Naive thymus-derived CD4-positive, alpha-beta T cell (primary cell): ENCODE measurements at regions of chr4 and their contacts with region 1.

Region 1: DNA sequence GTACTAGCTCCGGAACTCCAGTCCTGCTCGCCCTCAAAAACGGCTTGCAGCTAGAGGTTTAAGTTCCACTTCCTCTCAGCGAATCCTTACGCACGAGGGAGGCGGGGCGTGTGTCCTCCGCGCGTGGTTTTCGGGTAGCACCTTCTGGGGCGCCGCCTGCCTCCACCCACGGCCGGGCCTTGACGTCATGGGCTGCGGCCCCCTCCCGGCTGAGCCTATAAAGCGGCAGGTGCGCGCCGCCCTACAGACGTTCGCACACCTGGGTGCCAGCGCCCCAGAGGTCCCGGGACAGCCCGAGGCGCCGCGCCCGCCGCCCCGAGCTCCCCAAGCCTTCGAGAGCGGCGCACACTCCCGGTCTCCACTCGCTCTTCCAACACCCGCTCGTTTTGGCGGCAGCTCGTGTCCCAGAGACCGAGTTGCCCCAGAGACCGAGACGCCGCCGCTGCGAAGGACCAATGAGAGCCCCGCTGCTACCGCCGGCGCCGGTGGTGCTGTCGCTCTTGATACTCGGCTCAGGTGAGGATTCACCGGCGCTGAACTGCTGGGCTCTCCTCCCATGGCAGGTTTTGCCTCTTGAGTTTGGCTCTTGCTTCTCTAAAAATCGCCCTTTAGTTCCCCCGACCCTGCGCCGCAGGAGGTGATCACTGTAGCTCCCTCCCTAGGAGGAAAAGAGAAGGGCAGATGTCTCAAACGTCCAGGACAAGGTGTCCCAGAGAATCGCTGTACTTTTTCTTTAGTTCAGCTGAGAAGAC is at the start of gene AREG:
- DNase-seq: peak; percentile 85 to 96 (median 94)
- ATAC-seq: peak; percentile 97
- H3K4me3 ChIP-seq: peak within 1 kb of the TSS; percentile 63
- H3K4me3 Mint-ChIP-seq: peak within 1 kb of the TSS; percentile 84 to 96 (median 92)
- H3K27ac ChIP-seq: peak within 1 kb of the TSS; percentile 93
- H3K27ac Mint-ChIP-seq: peak within 1 kb of the TSS; percentile 74 to 99 (median 97)
- H3K4me1 ChIP-seq: peaks cover 0 to 6% of the 10 kb centered on the region in 2 donors
- H3K4me1 Mint-ChIP-seq: peaks cover 4 to 15% (median 14%) of the 10 kb centered on the region in 7 donors
- H3K27me3 ChIP-seq: no peaks in the 10 kb centered on the region
- H3K27me3 Mint-ChIP-seq: peaks cover 0 to 13% (median 0%) of the 10 kb centered on the region in 5 donors
- total RNA-seq, gene AREG: 0.36 to 30.5 (median 6.7) TPM in 4 of 5 experiments, not detected in the other

Region 2: GRCh38 chr4:74157561-74158465 is 287.3 kb before region 1 on chr4 and contains the start of gene MTHFD2L:
- CTCF ChIA-PET with region 1: no interaction called
- POLR2A ChIA-PET with region 1: no interaction called
- intact Hi-C with region 1: loop called in 1 of 2 experiments (anchors 1 kb)
- DNase-seq: peak; percentile 68 to 88 (median 75)
- ATAC-seq: peak; percentile 97
- H3K4me3 ChIP-seq: peak within 1 kb of the TSS; percentile 68
- H3K4me3 Mint-ChIP-seq: peak within 1 kb of the TSS; percentile 86 to 95 (median 90)
- H3K27ac ChIP-seq: peak within 1 kb of the TSS; percentile 78
- H3K27ac Mint-ChIP-seq: peak within 1 kb of the TSS; percentile 62 to 96 (median 90)
- H3K4me1 ChIP-seq: peaks cover 6 to 9% of the 10 kb centered on the region in 2 donors
- H3K4me1 Mint-ChIP-seq: peaks cover 10 to 48% (median 26%) of the 10 kb centered on the region in 7 donors
- H3K27me3 ChIP-seq: no peaks in the 10 kb centered on the region
- H3K27me3 Mint-ChIP-seq: peaks cover 0 to 30% (median 0%) of the 10 kb centered on the region in 5 donors
- total RNA-seq, gene MTHFD2L: 7.5 to 13.7 (median 10.4) TPM

Region 3: DNA sequence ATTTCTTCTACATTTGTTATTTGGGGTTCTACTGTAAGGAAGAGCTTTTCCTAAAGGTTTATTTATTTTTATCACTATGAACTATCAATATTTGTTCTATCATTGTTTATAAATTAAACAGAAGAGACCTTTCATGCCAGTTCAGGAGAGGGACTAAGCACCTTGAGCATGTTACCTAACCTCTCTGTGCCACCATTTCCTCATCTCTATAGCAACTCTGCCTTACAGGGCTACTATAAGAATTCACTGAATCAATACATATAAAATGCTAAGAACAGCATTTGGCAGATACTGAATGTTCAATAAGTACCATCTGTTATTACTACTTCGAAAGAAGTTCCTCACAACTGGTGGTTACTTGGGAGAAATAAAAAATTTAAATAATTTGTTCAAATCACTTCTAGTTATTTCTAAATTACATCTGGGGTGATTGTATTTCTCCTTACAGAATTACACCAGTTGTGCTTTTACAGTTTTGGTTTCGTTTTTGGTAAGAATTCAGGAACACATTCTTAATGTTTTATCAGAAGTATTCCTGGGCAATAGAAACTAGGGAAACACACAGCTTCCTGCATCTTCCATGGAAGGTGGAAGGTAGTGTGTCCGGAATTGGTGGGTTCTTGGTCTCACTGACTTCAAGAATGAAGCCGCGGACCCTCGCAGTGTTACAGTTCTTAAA is 47.2 kb before region 1 on chr4:
- CTCF ChIA-PET with region 1: interaction called, 3 read pairs
- POLR2A ChIA-PET with region 1: interaction called, 14 read pairs
- intact Hi-C with region 1: loop called (anchors 1 kb)
- DNase-seq: peak in 4 of 9 donors; percentile 10 to 58 (median 38)
- ATAC-seq: peak; percentile 78
- H3K4me3 ChIP-seq: peak overlapping the region; percentile 76
- H3K4me3 Mint-ChIP-seq: peak overlapping the region; percentile 89 to 99 (median 96)
- H3K27ac ChIP-seq: peak overlapping the region; percentile 83
- H3K27ac Mint-ChIP-seq: peak overlapping the region; percentile 92 to 99 (median 97)
- H3K4me1 ChIP-seq: no peaks in the 10 kb centered on the region
- H3K4me1 Mint-ChIP-seq: peaks cover 0 to 19% (median 11%) of the 10 kb centered on the region in 7 donors
- H3K27me3 ChIP-seq: no peaks in the 10 kb centered on the region
- H3K27me3 Mint-ChIP-seq: peaks cover 0 to 5% (median 0%) of the 10 kb centered on the region in 5 donors

Region 4: GRCh38 chr4:74466242-74466641 is 21.2 kb after region 1 on chr4:
- CTCF ChIA-PET with region 1: no interaction called
- POLR2A ChIA-PET with region 1: no interaction called
- intact Hi-C with region 1: no loop called
- DNase-seq: no peak
- ATAC-seq: no peak
- H3K4me3 ChIP-seq: no peak overlapping the region
- H3K4me3 Mint-ChIP-seq: no peak overlapping the region
- H3K27ac ChIP-seq: no peak overlapping the region
- H3K27ac Mint-ChIP-seq: no peak overlapping the region
- H3K4me1 ChIP-seq: no peaks in the 10 kb centered on the region
- H3K4me1 Mint-ChIP-seq: no peaks in the 10 kb centered on the region
- H3K27me3 ChIP-seq: no peaks in the 10 kb centered on the region
- H3K27me3 Mint-ChIP-seq: peaks cover 0 to 11% (median 1%) of the 10 kb centered on the region in 5 donors

Region 5: GRCh38 chr4:74623041-74623440 is 178.0 kb after region 1 on chr4:
- CTCF ChIA-PET with region 1: no interaction called
- POLR2A ChIA-PET with region 1: no interaction called
- intact Hi-C with region 1: loop called in 1 of 2 experiments (anchors 1 kb)
- DNase-seq: peak in 6 of 9 donors; percentile 4 to 47 (median 34)
- ATAC-seq: peak; percentile 70
- H3K4me3 ChIP-seq: no peak overlapping the region
- H3K4me3 Mint-ChIP-seq: peak overlapping the region in 2 of 10 donors; percentile 0 to 29
- H3K27ac ChIP-seq: no peak overlapping the region
- H3K27ac Mint-ChIP-seq: peak overlapping the region in 2 of 9 donors; percentile 4 to 8
- H3K4me1 ChIP-seq: peaks cover 0 to 20% of the 10 kb centered on the region in 2 donors
- H3K4me1 Mint-ChIP-seq: peaks cover 7 to 48% (median 37%) of the 10 kb centered on the region in 7 donors
- H3K27me3 ChIP-seq: no peaks in the 10 kb centered on the region
- H3K27me3 Mint-ChIP-seq: peaks cover 0 to 5% (median 0%) of the 10 kb centered on the region in 5 donors

Region 6: DNA sequence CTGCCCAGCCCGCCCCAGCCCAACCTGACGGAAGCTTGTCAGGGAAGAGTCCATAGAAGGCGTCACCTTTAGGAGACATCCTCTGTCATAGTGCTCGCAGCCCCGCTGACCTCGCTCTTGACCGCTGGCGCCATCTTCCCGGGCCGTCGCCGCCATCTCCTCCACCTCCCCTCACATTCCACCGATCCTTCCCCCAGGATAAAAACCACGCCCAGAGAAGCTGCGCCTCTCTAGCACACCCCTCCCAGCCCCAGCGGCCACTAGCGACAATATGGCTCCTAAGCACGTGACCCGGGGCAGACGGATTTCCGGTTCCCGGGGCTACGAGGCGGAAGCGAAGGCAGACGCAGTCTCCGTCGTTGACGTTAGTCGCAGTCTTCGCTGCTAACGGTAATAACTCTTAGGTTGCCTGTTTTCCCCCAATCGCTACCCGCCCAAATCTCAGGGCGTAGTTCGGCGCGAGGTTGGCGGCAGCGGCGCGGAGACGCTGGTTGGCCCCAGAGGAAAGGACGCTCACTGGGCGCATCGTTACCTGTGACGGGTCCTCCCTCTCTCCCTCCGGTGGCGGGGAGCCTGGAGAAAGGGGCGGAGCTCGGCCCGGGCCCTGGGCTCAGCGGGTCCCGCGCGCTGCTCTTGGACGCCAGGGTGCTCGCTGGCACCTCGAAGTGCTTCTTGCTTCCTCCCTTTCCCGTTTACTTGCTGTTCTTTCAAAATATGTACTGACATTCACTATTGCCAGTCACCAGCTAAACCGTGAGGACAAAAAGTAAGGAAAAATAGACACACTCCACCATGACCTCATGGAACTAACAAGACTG is 1069.3 kb after region 1 on chr4 and contains the starts of genes RCHY1 and THAP6:
- CTCF ChIA-PET with region 1: no interaction called
- POLR2A ChIA-PET with region 1: no interaction called
- intact Hi-C with region 1: loop called (anchors 5 to 10 kb)
- DNase-seq: peak; percentile 82 to 95 (median 93)
- ATAC-seq: peak; percentile 92
- H3K4me3 ChIP-seq: peak within 1 kb of the TSS; percentile 79
- H3K4me3 Mint-ChIP-seq: peak within 1 kb of the TSS in 1 of 10 donors; percentile 97
- H3K27ac ChIP-seq: peak within 1 kb of the TSS; percentile 98
- H3K27ac Mint-ChIP-seq: peak within 1 kb of the TSS in 7 of 9 donors; percentile 96 to 100 (median 98)
- H3K4me1 ChIP-seq: peaks cover 53 to 56% of the 10 kb centered on the region in 2 donors
- H3K4me1 Mint-ChIP-seq: peaks cover 30 to 63% (median 49%) of the 10 kb centered on the region in 7 donors
- H3K27me3 ChIP-seq: no peaks in the 10 kb centered on the region
- H3K27me3 Mint-ChIP-seq: no peaks in the 10 kb centered on the region
- total RNA-seq, gene RCHY1: 23.0 to 37.8 (median 29.6) TPM
- total RNA-seq, gene THAP6: 18.2 to 43.9 (median 25.1) TPM

Region 7: DNA sequence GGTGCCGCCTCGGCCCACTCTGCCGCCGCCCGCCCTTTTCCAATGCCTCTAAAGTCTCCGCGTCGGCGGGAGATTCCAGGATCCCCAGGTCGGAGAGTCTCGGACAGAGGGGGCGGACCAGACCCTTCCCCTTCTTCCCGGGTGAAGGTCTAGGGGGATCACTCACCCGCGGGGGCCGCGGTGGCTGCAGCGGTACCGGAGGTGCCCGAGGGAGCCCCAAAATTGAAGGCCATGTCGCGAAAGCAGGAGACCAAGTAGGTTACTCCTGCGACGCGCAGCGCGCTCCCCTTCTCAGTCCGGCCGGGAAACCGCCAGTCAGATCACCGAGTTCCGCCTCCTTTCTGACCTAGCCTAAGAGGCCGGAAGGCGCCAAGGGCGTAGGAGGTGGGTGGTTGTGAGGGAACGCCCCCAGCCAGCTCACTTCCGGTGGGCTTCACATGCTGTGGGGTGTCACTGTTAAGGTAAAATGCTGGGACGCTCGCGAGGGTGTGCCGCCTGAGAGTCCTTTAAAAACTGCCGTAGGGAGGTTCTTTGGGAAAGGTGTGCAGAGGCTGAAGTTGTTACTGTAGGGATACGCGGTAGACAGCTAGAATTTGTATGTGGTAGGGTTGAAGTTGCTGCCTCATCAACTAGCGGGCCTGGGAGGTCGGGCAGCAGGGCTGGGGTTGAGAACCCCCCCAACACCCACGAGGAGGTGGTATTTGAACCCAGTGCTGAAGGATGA is 1703.2 kb after region 1 on chr4 and contains the start of gene NUP54:
- CTCF ChIA-PET with region 1: no interaction called
- POLR2A ChIA-PET with region 1: no interaction called
- intact Hi-C with region 1: loop called in 1 of 2 experiments (anchors 5 kb)
- DNase-seq: peak; percentile 85 to 96 (median 92)
- ATAC-seq: peak; percentile 99
- H3K4me3 ChIP-seq: peak within 1 kb of the TSS; percentile 85
- H3K4me3 Mint-ChIP-seq: peak within 1 kb of the TSS; percentile 90 to 100 (median 96)
- H3K27ac ChIP-seq: peak within 1 kb of the TSS; percentile 93
- H3K27ac Mint-ChIP-seq: peak within 1 kb of the TSS; percentile 91 to 99 (median 94)
- H3K4me1 ChIP-seq: peaks cover 12% of the 10 kb centered on the region in 2 donors
- H3K4me1 Mint-ChIP-seq: peaks cover 21 to 52% (median 45%) of the 10 kb centered on the region in 7 donors
- H3K27me3 ChIP-seq: no peaks in the 10 kb centered on the region
- H3K27me3 Mint-ChIP-seq: no peaks in the 10 kb centered on the region
- total RNA-seq, gene NUP54: 51.1 to 82.0 (median 65.5) TPM